ENCODE measurements at regions of chr17 and their contacts with region 1.

Region 1: GRCh38 chr17:21019976-21020586 is 22.7 kb downstream of the USP22 start:
- DNase-seq: peak; percentile 62
- H3K4me3 Mint-ChIP-seq: no peak overlapping the region
- H3K27ac Mint-ChIP-seq: no peak overlapping the region
- H3K4me1 Mint-ChIP-seq: peaks cover 32% of the 10 kb centered on the region
- H3K27me3 Mint-ChIP-seq: no peaks in the 10 kb centered on the region

Region 2: GRCh38 chr17:20981046-20981920 is 38.8 kb before region 1 on chr17:
- CTCF ChIA-PET with region 1: no interaction called
- POLR2A ChIA-PET with region 1: no interaction called
- intact Hi-C with region 1: no loop called
- DNase-seq: no peak
- H3K4me3 Mint-ChIP-seq: no peak overlapping the region
- H3K27ac Mint-ChIP-seq: no peak overlapping the region
- H3K4me1 Mint-ChIP-seq: no peaks in the 10 kb centered on the region
- H3K27me3 Mint-ChIP-seq: peaks cover 19% of the 10 kb centered on the region

Region 3: DNA sequence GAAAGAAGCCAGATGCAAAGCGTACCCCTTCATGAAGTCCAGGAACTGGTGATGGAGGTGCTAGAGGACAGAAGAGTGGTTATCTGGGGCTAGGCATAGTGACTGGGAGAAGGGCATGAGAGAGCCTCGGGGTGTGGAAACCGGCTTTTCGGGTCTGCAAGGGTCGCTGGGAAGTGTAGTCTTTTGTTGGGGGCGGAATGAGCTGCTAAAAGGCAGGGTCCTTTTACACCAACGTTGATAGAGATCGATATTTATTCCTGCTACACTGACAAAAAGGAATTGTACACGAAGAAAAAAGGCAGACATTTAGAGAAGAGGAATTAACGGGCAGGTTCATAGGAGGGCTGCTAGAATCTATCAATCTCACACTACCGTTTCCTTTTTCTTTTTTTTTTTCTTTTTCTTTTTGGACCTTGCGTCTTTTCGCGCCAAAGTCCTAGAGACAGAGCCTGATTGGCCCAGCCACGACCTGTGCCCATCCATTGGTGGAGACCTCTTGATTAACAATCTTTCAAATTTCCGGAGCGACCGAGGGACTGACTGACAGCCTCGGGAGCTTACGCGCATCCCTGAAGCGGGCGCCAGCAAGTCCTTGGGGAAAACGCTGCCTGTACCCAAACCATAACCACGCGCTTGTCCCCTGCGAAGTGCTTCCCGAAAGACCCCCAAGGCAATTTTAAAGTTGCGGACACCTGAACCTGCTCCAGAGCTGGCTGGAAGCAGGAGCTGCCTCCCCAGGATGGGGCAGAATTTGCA is 79.0 kb after region 1 on chr17:
- CTCF ChIA-PET with region 1: interaction called, 10 read pairs
- POLR2A ChIA-PET with region 1: no interaction called
- intact Hi-C with region 1: no loop called
- DNase-seq: peak; percentile 87
- H3K4me3 Mint-ChIP-seq: peak overlapping the region; percentile 97
- H3K27ac Mint-ChIP-seq: peak overlapping the region; percentile 88
- H3K4me1 Mint-ChIP-seq: peaks cover 4% of the 10 kb centered on the region
- H3K27me3 Mint-ChIP-seq: no peaks in the 10 kb centered on the region

Region 4: GRCh38 chr17:21132428-21132827 is 112.3 kb after region 1 on chr17:
- CTCF ChIA-PET with region 1: no interaction called
- POLR2A ChIA-PET with region 1: no interaction called
- intact Hi-C with region 1: no loop called
- DNase-seq: no peak
- H3K4me3 Mint-ChIP-seq: no peak overlapping the region
- H3K27ac Mint-ChIP-seq: no peak overlapping the region
- H3K4me1 Mint-ChIP-seq: peaks cover 12% of the 10 kb centered on the region
- H3K27me3 Mint-ChIP-seq: no peaks in the 10 kb centered on the region

Measured in activated CD4-positive, alpha-beta memory T cell treated with anti-CD3 and anti-CD28 coated beads for 36 hours (primary cell).